ENCODE measurements at regions of chr3 and their contacts with region 1.

Region 1: GRCh38 chr3:98602078-98602678 is 8.8 kb upstream of the CPOX start:
- DNase-seq: peak; percentile 39 to 72
- H3K4me3 ChIP-seq: no peak overlapping the region
- H3K4me1 ChIP-seq: no peaks in the 10 kb centered on the region
- H3K27me3 ChIP-seq: no peaks in the 10 kb centered on the region

Region 2: DNA sequence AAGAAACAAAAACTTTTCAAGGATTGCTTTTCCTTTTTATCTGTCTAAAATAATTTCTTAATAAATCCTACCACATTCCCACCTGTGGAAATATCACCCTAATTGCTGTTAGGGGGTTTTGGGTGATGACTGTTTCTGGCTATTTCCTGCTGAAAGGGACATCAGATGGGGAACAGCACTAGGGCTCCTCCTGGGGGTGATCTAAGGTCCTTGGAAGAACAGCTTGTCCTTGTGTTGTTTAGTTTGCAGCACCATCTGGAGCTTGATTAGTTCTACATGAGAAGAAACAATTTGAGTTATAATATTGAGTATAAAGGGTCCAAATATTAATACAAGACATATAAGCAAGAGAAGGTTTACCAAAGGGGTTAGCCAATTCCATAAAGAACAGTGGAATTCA is 417.0 kb before region 1 on chr3:
- in situ Hi-C with region 1: no loop called
- DNase-seq: no peak
- H3K4me3 ChIP-seq: no peak overlapping the region
- H3K4me1 ChIP-seq: no peaks in the 10 kb centered on the region
- H3K27me3 ChIP-seq: no peaks in the 10 kb centered on the region; the same call in 1 of the 2 replicates

Region 3: GRCh38 chr3:98994128-98994762 is 392.1 kb after region 1 on chr3:
- in situ Hi-C with region 1: loop called (anchors 10 kb)
- DNase-seq: peak in 1 of 2 experiments; percentile 31
- H3K4me3 ChIP-seq: no peak overlapping the region
- H3K4me1 ChIP-seq: peaks cover 5% of the 10 kb centered on the region
- H3K27me3 ChIP-seq: 0 out of 2 replicates have a peak, but pooled peaks cover 6% of the 10 kb centered on the region

Measured in HAP-1 (cell line).